ENCODE measurements at regions of chr19 and their contacts with region 1.

Region 1: GRCh38 chr19:14479975-14480699 is 5.0 kb upstream of the PTGER1 start:
- DNase-seq: peak; percentile 77 to 86 (median 84)
- ATAC-seq: peak; percentile 83
- H3K4me3 ChIP-seq: no peak overlapping the region
- H3K27ac ChIP-seq: no peak overlapping the region
- H3K4me1 ChIP-seq: peaks cover 9 to 50% of the 10 kb centered on the region in 2 experiments
- H3K27me3 ChIP-seq: no peaks in the 10 kb centered on the region
- CTCF ChIP-seq: peak; percentile 87 to 97 (median 95)
- EP300 ChIP-seq: no peak
- POLR2A ChIP-seq: no peak
- RAD21 ChIP-seq: peak; percentile 58 to 82

Region 2: DNA sequence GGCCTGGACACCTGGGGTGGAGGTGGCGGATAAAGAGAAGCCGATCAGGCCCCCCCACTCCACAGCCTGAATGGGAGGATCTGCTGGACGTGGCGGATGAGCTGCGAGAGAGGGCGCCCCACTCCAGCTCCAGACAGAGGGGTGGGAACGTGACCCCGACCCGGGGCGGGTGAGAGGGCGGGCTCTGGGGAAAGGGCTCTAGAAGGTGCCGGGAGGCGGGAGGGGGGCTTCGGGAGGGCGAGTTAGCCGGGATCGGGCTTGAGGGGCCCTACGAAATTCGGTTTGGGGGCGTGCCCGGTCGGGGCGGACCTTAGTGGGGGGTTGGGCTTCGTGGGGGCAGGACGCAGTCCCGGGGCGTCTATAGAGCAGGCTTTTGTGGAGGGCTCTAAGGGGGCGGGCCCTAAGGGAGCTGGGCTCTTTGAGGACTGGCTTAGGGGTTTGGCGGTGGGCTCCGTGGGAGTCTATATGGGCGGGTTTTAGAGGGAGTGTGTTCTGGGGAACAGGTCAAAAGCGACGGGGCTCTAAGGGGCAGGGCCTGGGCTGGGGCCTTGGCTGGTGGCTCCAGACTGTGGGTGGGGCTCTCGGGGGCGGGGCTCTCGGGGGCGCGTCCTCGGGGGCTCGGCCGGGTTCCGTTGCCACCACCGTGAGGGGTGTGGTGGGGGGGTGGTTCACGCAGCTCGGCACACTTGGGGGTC is 607.3 kb before region 1 on chr19:
- CTCF ChIA-PET with region 1: no interaction called
- POLR2A ChIA-PET with region 1: no interaction called
- in situ Hi-C with region 1: loop called (anchors 10 kb)
- intact Hi-C with region 1: no loop called
- DNase-seq: peak; percentile 82 to 92 (median 90)
- ATAC-seq: peak; percentile 94
- H3K4me3 ChIP-seq: peak overlapping the region; percentile 58
- H3K27ac ChIP-seq: peak overlapping the region; percentile 42; the same call in 1 of the 3 replicates
- H3K4me1 ChIP-seq: peaks cover 6 to 36% of the 10 kb centered on the region in 2 experiments
- H3K27me3 ChIP-seq: no peaks in the 10 kb centered on the region
- CTCF ChIP-seq: peak; percentile 60 to 67 (median 64)
- EP300 ChIP-seq: no peak
- POLR2A ChIP-seq: no peak; the same call in 1 of the 2 replicates
- RAD21 ChIP-seq: peak in 1 of 2 experiments; percentile 58; a peak in 3 of 4 replicates

Region 3: GRCh38 chr19:14198384-14199376 is 281.5 kb before region 1 on chr19:
- CTCF ChIA-PET with region 1: no interaction called
- POLR2A ChIA-PET with region 1: no interaction called
- in situ Hi-C with region 1: loop called (anchors 5 kb)
- intact Hi-C with region 1: loop called (anchors 10 kb)
- DNase-seq: peak in 1 of 4 experiments; percentile 33
- ATAC-seq: peak; percentile 11; the same call in 1 of the 3 replicates
- H3K4me3 ChIP-seq: no peak overlapping the region
- H3K27ac ChIP-seq: no peak overlapping the region
- H3K4me1 ChIP-seq: peaks cover 0 to 12% of the 10 kb centered on the region in 2 experiments; a peak in 2 of 5 replicates
- H3K27me3 ChIP-seq: no peaks in the 10 kb centered on the region
- CTCF ChIP-seq: peak; percentile 25 to 47 (median 34); a peak in 4 of 6 replicates
- EP300 ChIP-seq: no peak
- POLR2A ChIP-seq: no peak
- RAD21 ChIP-seq: peak in 1 of 2 experiments; percentile 45; a peak in 2 of 4 replicates

Region 4: GRCh38 chr19:14366498-14366915 is 113.6 kb before region 1 on chr19:
- CTCF ChIA-PET with region 1: no interaction called
- POLR2A ChIA-PET with region 1: no interaction called
- in situ Hi-C with region 1: no loop called
- intact Hi-C with region 1: loop called (anchors 10 kb)
- DNase-seq: peak; percentile 77 to 88 (median 84)
- ATAC-seq: peak; percentile 69
- H3K4me3 ChIP-seq: no peak overlapping the region
- H3K27ac ChIP-seq: 0 out of 3 replicates have a peak overlapping the region, but pooled peaks have one; percentile 39
- H3K4me1 ChIP-seq: peaks cover 44 to 53% of the 10 kb centered on the region in 2 experiments
- H3K27me3 ChIP-seq: no peaks in the 10 kb centered on the region
- CTCF ChIP-seq: no peak
- EP300 ChIP-seq: no peak
- POLR2A ChIP-seq: no peak
- RAD21 ChIP-seq: no peak